AG04450 (cell line): ENCODE measurements at regions of chr15 and their contacts with region 1.

Region 1: DNA sequence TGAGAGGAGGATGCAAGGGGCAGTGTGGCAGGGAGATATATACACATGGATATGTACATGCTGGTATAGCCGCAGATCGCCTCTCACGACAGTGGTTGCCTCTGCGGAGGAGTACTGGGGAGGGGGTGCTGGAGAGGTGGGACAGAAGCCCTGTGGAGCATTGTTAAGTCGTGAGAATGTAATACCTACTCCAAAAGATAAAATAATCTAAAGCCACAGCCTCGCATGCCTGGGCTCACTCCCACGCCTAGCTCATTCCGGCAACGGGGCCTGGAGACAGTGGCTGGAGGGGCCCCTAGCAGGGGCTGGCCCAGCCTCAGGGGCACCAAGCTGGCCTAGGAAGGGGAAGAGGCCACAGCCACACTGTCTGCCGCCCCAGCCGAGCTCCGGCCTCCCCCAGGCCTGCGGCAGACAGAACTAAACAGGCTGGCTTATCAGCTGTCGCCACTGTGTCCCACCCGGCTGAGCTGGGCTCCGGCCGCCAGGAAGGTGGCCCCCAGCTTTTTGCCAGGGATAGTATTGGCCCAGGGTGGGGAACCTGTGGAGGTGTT is 65.1 kb upstream of the LCTL start:
- DNase-seq: no peak
- H3K4me3 ChIP-seq: no peak overlapping the region
- H3K27ac ChIP-seq: no peak overlapping the region
- H3K27me3 ChIP-seq: no peaks in the 10 kb centered on the region
- CTCF ChIP-seq: no peak

Region 2: GRCh38 chr15:66588537-66588936 is 42.3 kb before region 1 on chr15:
- CTCF ChIA-PET with region 1: no interaction called
- POLR2A ChIA-PET with region 1: no interaction called
- DNase-seq: no peak
- H3K4me3 ChIP-seq: no peak overlapping the region
- H3K27ac ChIP-seq: no peak overlapping the region
- H3K27me3 ChIP-seq: peaks cover 30% of the 10 kb centered on the region
- CTCF ChIP-seq: 0 out of 2 replicates have a peak, but pooled peaks have one; percentile 4

Region 3: GRCh38 chr15:66670762-66671580 is 40.1 kb after region 1 on chr15:
- CTCF ChIA-PET with region 1: no interaction called
- POLR2A ChIA-PET with region 1: interaction called, 11 read pairs
- DNase-seq: no peak
- H3K4me3 ChIP-seq: no peak overlapping the region
- H3K27ac ChIP-seq: no peak overlapping the region
- H3K27me3 ChIP-seq: peaks cover 3% of the 10 kb centered on the region
- CTCF ChIP-seq: no peak

Region 4: GRCh38 chr15:66747886-66748707 is 117.2 kb after region 1 on chr15:
- CTCF ChIA-PET with region 1: no interaction called
- POLR2A ChIA-PET with region 1: no interaction called
- DNase-seq: peak; percentile 45
- H3K4me3 ChIP-seq: peak overlapping the region; percentile 29
- H3K27ac ChIP-seq: peak overlapping the region; percentile 94
- H3K27me3 ChIP-seq: no peaks in the 10 kb centered on the region
- CTCF ChIP-seq: no peak